ENCODE measurements at regions of chr22 and their contacts with region 1.

Region 1: DNA sequence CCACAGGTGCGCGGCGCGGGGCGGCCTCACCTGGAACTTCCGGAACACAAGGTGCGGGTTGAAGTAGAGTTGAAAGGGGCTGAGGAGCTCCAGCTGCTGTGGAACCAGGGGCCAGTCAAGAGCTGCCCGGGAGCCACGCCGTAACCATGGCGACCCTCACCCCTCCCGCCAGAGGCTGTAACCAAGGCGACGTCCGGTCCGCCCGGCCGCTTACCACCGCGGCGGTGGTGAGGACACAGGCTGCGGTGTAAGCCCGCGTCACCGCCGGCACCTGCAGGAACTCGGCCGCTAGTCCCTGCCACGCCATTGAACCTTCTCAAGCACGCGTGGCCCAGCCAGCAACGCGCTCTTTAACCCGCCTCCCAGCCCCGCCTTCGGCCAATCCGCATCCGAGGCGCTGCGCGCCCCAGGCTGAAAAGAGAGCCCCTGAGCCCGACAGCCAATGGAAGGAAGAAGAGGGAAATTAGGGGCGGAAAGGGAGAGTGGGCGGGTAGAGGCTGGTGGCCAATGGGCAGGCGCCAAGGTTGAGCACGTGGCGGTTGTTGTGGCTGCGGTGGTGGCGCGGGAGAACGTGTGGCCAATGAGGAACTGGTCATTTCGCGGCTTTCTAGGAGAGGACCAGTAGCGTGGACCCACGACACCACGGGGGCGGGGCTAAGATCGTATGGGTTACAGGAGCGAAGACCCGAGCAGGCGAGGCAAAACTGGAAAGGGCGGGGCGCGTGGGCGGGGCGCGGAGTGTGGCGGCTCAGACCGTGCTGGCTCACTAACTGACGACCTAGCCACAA is at the start of gene DERL3:
- DNase-seq: peak; percentile 97
- H3K4me3 Mint-ChIP-seq: peak within 1 kb of the TSS; percentile 93
- H3K27ac Mint-ChIP-seq: peak within 1 kb of the TSS; percentile 97
- H3K4me1 Mint-ChIP-seq: peaks cover 27% of the 10 kb centered on the region
- H3K27me3 Mint-ChIP-seq: peaks cover 3% of the 10 kb centered on the region
- total RNA-seq, gene DERL3: 13.8 and 18.8 TPM in 2 replicates

Region 2: GRCh38 chr22:23539135-23539838 is 299.6 kb before region 1 on chr22:
- intact Hi-C with region 1: no loop called
- DNase-seq: peak; percentile 60
- H3K4me3 Mint-ChIP-seq: peak overlapping the region; percentile 40
- H3K27ac Mint-ChIP-seq: no peak overlapping the region
- H3K4me1 Mint-ChIP-seq: peaks cover 11% of the 10 kb centered on the region
- H3K27me3 Mint-ChIP-seq: peaks cover 23% of the 10 kb centered on the region

Region 3: DNA sequence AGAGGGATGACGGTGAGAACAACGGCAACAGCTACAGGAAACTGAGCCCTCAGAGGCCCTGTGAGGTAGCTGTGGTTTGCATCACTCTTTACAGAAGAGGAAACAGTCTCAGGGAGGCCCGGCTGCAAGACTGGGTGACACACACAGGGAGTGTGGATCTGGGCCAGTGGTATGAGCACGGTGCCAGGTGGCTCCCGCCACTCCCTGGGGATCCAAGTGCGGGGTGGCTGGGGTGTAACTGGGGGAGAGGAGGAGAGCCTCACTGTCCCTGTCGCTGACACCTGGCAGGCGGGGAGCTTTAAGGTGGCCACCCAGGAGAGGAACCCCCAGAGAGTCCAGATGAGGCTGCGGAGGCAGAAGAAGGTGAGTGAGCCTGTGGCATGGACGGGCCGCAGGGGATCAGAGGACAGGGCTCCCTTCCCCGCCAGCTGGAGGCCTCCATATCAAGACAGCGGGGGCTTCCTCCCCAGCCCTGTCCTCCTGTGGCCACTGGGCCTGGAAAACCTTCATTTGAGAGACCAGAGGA is 142.5 kb before region 1 on chr22:
- intact Hi-C with region 1: loop called (anchors 2 kb)
- DNase-seq: peak; percentile 75
- H3K4me3 Mint-ChIP-seq: peak overlapping the region; percentile 97
- H3K27ac Mint-ChIP-seq: peak overlapping the region; percentile 100
- H3K4me1 Mint-ChIP-seq: peaks cover 41% of the 10 kb centered on the region
- H3K27me3 Mint-ChIP-seq: no peaks in the 10 kb centered on the region

Region 4: DNA sequence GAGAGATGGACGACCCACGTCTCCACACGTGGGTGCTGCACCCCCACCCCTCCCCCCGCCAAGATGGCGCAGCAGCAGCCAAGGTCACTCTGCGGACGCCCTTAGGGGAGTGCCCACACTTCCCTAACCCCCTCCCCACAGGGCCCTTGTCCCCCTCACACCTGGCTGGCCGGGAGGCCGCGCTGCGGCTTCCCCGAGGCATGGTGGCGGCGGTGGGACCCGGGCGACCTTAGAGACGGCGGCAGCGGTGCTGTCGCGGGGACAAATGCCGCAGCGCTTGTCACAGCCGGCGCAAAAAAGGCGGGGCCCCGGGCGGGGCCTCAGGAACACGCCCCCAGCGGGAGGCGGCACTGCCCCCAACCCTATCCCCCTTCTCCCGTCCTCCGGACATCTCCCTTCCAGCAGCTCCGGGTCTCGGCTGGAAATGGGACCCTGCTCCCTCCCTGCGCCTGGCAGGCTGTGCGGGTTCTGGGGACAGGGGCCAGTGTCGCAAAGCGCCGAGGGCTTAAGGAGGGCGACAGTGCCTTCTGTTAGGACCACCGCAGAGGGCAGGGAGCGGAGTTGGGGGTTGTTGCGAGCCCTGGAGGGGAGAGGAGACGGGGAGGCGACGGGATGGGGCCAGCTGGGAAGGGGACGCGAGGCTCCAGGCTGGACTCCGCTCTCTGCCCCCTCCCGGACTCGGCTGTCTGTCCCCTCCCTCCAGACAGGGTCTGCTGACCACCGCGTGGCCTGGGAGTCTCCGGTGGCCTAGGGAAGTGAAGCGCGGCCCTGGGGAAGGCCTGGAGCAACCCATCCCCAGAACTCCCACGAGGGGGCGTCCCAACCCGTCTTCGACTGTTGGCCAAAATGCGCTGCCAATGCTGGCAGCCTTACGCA is 71.0 kb before region 1 on chr22 and contains the start of gene CHCHD10:
- intact Hi-C with region 1: loop called (anchors 1 kb)
- DNase-seq: peak; percentile 77
- H3K4me3 Mint-ChIP-seq: peak within 1 kb of the TSS; percentile 86
- H3K27ac Mint-ChIP-seq: peak within 1 kb of the TSS; percentile 67
- H3K4me1 Mint-ChIP-seq: peaks cover 24% of the 10 kb centered on the region
- H3K27me3 Mint-ChIP-seq: peaks cover 6% of the 10 kb centered on the region
- total RNA-seq, gene CHCHD10: 89.1 and 96.4 TPM in 2 replicates

Region 5: GRCh38 chr22:23820748-23821211 is 18.1 kb before region 1 on chr22:
- intact Hi-C with region 1: loop called (anchors 2 kb)
- DNase-seq: peak; percentile 35
- H3K4me3 Mint-ChIP-seq: peak overlapping the region; percentile 8
- H3K27ac Mint-ChIP-seq: peak overlapping the region; percentile 80
- H3K4me1 Mint-ChIP-seq: peaks cover 23% of the 10 kb centered on the region
- H3K27me3 Mint-ChIP-seq: no peaks in the 10 kb centered on the region

Region 6: DNA sequence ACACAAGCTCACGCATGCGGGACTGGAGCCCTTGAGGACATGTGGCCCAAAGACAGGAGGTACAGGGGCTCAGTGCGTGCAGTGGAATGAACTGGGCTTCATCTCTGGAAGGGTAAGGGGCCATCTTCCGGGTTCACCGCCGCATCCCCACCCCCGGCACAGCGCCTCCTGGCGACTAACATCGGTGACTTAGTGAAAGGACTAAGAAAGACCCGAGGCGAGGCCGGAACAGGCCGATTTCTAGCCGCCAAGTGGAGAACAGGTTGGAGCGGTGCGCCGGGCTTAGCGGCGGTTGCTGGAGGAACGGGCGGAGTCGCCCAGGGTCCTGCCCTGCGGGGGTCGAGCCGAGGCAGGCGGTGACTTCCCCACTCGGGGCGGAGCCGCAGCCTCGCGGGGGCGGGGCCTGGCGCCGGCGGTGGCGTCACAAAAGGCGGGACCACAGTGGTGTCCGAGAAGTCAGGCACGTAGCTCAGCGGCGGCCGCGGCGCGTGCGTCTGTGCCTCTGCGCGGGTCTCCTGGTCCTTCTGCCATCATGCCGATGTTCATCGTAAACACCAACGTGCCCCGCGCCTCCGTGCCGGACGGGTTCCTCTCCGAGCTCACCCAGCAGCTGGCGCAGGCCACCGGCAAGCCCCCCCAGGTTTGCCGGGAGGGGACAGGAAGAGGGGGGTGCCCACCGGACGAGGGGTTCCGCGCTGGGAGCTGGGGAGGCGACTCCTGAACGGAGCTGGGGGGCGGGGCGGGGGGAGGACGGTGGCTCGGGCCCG is 55.3 kb after region 1 on chr22 and contains the start of gene MIF:
- intact Hi-C with region 1: loop called (anchors 1 kb)
- DNase-seq: peak; percentile 99
- H3K4me3 Mint-ChIP-seq: peak within 1 kb of the TSS; percentile 98
- H3K27ac Mint-ChIP-seq: peak within 1 kb of the TSS; percentile 99
- H3K4me1 Mint-ChIP-seq: peaks cover 22% of the 10 kb centered on the region
- H3K27me3 Mint-ChIP-seq: no peaks in the 10 kb centered on the region
- total RNA-seq, gene MIF: 1,136 and 1,212 TPM in 2 replicates

Region 7: GRCh38 chr22:23922651-23923320 is 83.9 kb after region 1 on chr22:
- intact Hi-C with region 1: no loop called
- DNase-seq: no peak
- H3K4me3 Mint-ChIP-seq: no peak overlapping the region
- H3K27ac Mint-ChIP-seq: no peak overlapping the region
- H3K4me1 Mint-ChIP-seq: no peaks in the 10 kb centered on the region
- H3K27me3 Mint-ChIP-seq: peaks cover 3% of the 10 kb centered on the region